ENCODE measurements at regions of chr22 and their contacts with region 1.

Region 1: DNA sequence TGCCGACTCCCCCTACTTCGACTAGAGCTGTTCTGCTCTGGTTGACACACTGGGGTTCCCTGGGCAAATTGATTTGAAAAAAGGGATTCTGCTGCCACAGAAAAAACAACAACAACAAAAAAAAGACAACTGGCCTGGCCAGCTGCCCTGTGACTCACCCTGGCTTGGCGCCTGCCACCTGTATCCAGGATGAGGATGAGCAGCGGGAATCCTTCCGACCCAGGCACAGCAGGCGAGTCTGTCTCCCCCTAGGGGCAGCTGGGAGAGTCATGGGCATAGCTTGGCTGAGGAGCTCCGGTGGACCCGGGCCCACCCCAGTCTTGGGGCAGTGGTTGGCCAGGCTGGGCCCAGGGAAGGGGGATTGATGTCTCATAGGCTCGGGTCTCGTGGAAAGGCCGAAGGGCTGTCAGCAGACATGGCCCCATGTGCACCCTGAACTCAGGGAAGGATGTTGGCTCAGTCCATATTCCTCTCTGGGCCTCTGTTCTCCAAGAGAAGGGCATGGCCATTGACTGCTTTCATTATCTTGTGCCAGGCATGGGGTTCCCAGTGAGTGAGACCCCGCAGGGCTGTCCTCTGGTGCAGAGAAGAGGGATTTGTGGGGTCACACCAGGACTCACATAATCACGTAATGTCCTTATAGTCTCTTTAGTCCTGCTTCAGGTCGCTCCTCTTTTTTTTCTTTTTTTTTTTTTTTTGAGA is 10.4 kb upstream of the SUN2 start:
- DNase-seq: peak; percentile 89
- H3K4me3 Mint-ChIP-seq: no peak overlapping the region
- H3K27ac Mint-ChIP-seq: no peak overlapping the region
- H3K4me1 Mint-ChIP-seq: peaks cover 6% of the 10 kb centered on the region
- H3K27me3 Mint-ChIP-seq: no peaks in the 10 kb centered on the region
- CTCF ChIP-seq: peak; percentile 91

Region 2: GRCh38 chr22:38733329-38733723 is 32.9 kb before region 1 on chr22:
- CTCF ChIA-PET with region 1: interaction called, 7 read pairs
- POLR2A ChIA-PET with region 1: no interaction called
- intact Hi-C with region 1: loop called (anchors 1 kb)
- DNase-seq: peak; percentile 49
- H3K4me3 Mint-ChIP-seq: no peak overlapping the region
- H3K27ac Mint-ChIP-seq: peak overlapping the region; percentile 63
- H3K4me1 Mint-ChIP-seq: peaks cover 11% of the 10 kb centered on the region
- H3K27me3 Mint-ChIP-seq: no peaks in the 10 kb centered on the region
- CTCF ChIP-seq: peak; percentile 71

Region 3: GRCh38 chr22:38777087-38777671 is 11.0 kb after region 1 on chr22:
- CTCF ChIA-PET with region 1: interaction called, 11 read pairs
- POLR2A ChIA-PET with region 1: interaction called, 3 read pairs
- intact Hi-C with region 1: no loop called
- DNase-seq: no peak
- H3K4me3 Mint-ChIP-seq: no peak overlapping the region
- H3K27ac Mint-ChIP-seq: no peak overlapping the region
- H3K4me1 Mint-ChIP-seq: peaks cover 5% of the 10 kb centered on the region
- H3K27me3 Mint-ChIP-seq: no peaks in the 10 kb centered on the region
- CTCF ChIP-seq: no peak

Region 4: GRCh38 chr22:38843201-38843715 is 77.0 kb after region 1 on chr22:
- CTCF ChIA-PET with region 1: interaction called, 3 read pairs
- POLR2A ChIA-PET with region 1: no interaction called
- intact Hi-C with region 1: loop called (anchors 5 kb)
- DNase-seq: no peak
- H3K4me3 Mint-ChIP-seq: peak overlapping the region; percentile 62
- H3K27ac Mint-ChIP-seq: no peak overlapping the region
- H3K4me1 Mint-ChIP-seq: peaks cover 14% of the 10 kb centered on the region
- H3K27me3 Mint-ChIP-seq: peaks cover 51% of the 10 kb centered on the region
- CTCF ChIP-seq: no peak

Region 5: GRCh38 chr22:39123751-39124601 is 357.7 kb after region 1 on chr22:
- CTCF ChIA-PET with region 1: interaction called, 8 read pairs
- POLR2A ChIA-PET with region 1: no interaction called
- intact Hi-C with region 1: loop called (anchors 5 kb)
- DNase-seq: no peak
- H3K4me3 Mint-ChIP-seq: no peak overlapping the region
- H3K27ac Mint-ChIP-seq: no peak overlapping the region
- H3K4me1 Mint-ChIP-seq: no peaks in the 10 kb centered on the region
- H3K27me3 Mint-ChIP-seq: no peaks in the 10 kb centered on the region
- CTCF ChIP-seq: no peak